Activated T-helper 1 cell treated with anti-CD3 and anti-CD28 coated beads, Interleukin-12 subunit alpha, Interleukin-12 subunit beta, Interleukin-2, Interleukin-4 antibody, amounts not matched to agents 30 ng/mL and 10 ng/mL and 1 ng/mL, durations not matched to agents 14 hours and 24 hours and 36 hours (primary cell): ENCODE measurements at regions of chr9 and their contacts with region 1.

Region 1: GRCh38 chr9:68653141-68653595 is 51.9 kb upstream of the PIP5K1B start:
- DNase-seq: peak; percentile 12
- H3K4me3 Mint-ChIP-seq: peak overlapping the region; percentile 35
- H3K27ac Mint-ChIP-seq: peak overlapping the region; percentile 88
- H3K4me1 Mint-ChIP-seq: peaks cover 52% of the 10 kb centered on the region
- H3K27me3 Mint-ChIP-seq: peaks cover 4% of the 10 kb centered on the region

Region 2: GRCh38 chr9:68685770-68686169 is 32.6 kb after region 1 on chr9:
- intact Hi-C with region 1: loop called (anchors 1 kb)
- DNase-seq: no peak
- H3K4me3 Mint-ChIP-seq: no peak overlapping the region
- H3K27ac Mint-ChIP-seq: no peak overlapping the region
- H3K4me1 Mint-ChIP-seq: peaks cover 11% of the 10 kb centered on the region
- H3K27me3 Mint-ChIP-seq: no peaks in the 10 kb centered on the region

Region 3: DNA sequence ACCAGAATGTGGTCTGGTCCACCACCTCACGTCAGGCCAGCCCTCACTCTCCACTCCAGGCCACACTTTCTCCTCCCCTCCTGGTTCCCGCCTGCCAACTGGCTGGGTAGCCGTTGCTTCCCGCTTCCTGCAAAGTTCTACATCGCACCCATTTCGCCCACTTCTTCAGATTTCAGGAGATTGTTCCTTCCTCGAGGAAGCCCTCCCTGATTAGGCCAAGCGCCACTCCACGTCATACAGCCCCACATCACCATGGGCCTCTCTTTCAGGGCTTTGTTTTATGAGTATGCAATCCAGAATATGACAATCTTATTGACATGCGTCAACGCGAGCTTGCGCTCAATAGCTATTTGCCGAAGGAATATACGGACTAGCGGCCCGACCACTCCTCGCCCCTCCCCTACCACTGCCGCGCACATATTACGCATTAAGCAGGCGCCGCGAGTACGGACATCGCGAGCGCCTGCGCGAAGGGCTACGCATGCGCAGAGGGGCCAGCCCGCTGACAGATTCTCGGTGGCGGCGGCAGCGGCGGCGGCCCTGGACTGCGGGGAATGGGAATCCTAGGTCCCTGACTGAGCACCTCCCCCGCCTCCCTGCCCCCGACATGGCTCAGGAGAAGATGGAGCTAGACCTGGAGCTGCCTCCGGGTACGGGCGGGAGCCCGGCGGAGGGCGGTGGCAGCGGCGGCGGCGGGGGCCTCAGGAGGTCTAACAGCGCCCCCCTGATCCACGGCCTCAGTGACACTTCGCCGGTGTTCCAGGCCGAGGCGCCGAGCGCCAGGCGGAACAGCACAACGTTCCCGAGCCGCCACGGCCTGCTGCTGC is 126.6 kb after region 1 on chr9:
- intact Hi-C with region 1: loop called (anchors 1 kb)
- DNase-seq: peak; percentile 89
- H3K4me3 Mint-ChIP-seq: no peak overlapping the region
- H3K27ac Mint-ChIP-seq: no peak overlapping the region
- H3K4me1 Mint-ChIP-seq: peaks cover 4% of the 10 kb centered on the region
- H3K27me3 Mint-ChIP-seq: no peaks in the 10 kb centered on the region

Region 4: DNA sequence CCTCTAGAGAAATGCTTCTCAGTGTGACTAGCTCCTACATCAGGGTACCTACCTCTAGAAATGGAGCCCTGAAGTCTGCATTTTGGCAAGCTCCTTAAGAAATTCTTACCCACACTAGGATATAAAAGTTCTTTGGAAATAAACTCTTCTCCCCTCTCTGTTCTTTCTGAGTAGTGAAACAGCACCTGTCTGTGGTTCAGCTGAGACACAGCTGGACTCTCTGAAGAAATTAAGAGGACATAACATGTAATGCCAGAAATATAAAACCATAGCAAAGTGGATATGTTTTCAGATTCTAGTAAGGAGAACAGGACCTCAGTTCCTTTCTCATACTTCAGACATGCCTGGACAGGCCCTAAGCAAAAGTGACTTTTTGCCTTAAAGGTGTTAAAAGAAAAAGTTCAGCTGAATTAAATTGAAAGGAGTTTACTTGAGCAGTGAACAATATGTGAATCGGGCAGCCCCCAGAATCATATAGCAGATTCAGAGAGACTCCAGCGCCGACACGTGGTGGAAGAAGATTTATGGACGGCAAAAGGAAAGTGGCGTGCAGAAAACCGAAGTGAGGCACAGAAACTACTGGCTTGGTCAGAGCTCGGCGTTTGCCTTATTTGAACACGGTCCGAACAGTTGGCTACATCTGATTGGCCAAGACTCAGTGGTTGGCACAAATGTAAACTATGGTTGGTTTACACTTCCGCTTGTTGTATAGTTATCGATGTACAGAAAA is 296.3 kb after region 1 on chr9:
- intact Hi-C with region 1: loop called (anchors 1 kb)
- DNase-seq: no peak
- H3K4me3 Mint-ChIP-seq: peak overlapping the region; percentile 62
- H3K27ac Mint-ChIP-seq: peak overlapping the region; percentile 69
- H3K4me1 Mint-ChIP-seq: peaks cover 76% of the 10 kb centered on the region
- H3K27me3 Mint-ChIP-seq: no peaks in the 10 kb centered on the region

Region 5: DNA sequence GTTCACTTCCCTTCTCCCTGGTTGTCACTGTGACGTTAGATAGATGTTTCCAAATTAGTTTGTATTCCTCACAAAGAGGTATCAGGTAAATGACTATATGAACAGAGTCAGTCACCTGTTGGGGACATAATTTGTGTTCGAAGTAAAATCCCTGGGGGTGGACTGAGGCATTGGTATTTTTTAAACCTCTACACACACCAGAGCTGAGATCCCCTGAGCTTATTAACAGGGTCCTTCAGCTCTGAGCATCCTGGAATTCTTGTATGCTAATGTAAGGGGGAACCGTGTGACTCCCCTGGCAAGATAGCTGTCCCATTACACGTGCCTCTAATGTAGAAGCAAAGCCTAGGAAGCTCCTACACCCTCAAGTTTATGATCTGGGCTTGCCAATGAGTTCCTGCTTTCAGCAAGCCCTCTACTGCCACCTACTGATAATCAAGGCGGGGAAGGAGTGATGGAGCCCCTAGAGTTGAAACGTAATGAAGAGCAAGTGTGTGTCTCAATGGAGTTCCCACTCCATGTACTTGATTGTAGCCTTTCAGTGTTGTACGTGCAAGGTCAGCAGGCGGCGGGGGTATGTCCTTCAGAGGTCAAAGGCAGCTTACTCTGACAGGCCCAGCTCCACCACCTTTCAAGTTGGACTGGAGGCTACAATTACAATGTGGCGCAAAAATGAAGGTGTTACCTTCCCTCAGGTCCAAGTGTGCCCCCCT is 346.4 kb after region 1 on chr9:
- intact Hi-C with region 1: loop called (anchors 2 kb)
- DNase-seq: peak; percentile 58
- H3K4me3 Mint-ChIP-seq: no peak overlapping the region
- H3K27ac Mint-ChIP-seq: peak overlapping the region; percentile 61
- H3K4me1 Mint-ChIP-seq: peaks cover 38% of the 10 kb centered on the region
- H3K27me3 Mint-ChIP-seq: peaks cover 2% of the 10 kb centered on the region

Region 6: DNA sequence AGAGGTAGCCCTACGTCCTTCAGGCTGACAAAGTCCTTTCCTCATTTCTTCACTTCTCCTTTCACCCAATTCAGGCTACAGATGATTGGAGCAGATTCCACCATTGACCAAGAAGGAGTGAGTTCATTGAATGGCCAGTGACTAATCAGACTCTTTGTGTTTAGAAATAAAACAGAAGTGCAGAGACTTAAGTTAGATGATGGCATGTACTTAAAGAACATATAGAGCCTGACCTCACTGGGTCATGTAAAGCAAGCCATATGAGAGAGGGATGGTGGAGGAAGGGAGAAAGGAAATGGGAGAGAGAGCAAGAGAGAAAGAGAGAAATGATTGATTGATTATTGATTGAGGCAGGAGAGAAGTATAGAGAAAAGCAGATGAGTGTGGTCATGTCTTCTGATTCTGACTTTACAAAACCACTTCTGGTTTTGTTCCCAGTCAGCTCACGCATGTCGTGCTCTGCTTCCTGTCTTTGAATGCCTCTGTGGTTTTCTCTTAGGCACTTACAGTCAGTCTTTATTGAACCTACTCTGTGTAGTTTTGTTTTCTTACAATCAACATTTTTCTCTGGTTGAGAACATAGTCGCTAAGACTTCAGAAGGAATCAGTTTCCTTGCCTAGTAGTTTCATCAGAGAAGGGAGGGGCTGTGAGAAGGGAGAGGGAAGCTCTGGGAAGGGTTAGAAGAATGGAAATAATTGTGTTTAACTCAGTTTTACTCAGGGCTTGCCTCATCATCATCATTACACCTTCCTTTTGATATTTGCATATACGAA is 1910.5 kb after region 1 on chr9:
- intact Hi-C with region 1: loop called (anchors 10 kb)
- DNase-seq: peak; percentile 70
- H3K4me3 Mint-ChIP-seq: peak overlapping the region; percentile 69
- H3K27ac Mint-ChIP-seq: peak overlapping the region; percentile 89
- H3K4me1 Mint-ChIP-seq: peaks cover 72% of the 10 kb centered on the region
- H3K27me3 Mint-ChIP-seq: peaks cover 2% of the 10 kb centered on the region